Heart left ventricle (tissue), 16 donors: ENCODE measurements at regions of chr5 and their contacts with region 1.

Region 1: DNA sequence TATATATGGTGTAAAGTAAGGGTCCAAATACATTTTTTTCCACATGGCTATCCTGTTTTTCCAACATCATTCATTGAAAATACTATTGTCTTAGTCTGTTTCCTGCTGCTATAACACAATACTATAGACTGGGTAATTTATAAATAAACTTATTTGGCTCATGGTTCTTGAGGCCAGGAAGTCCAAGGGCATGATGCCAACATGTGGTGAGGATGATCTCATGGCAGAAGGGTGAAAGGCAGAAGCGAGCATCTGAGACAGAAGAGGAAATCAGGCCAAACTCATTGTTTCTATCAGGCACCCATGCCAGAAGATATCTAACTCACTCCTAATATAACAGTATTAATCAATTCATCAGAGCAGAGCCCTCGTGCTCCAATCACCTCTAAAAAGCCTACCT is 42.6 kb downstream of the ANKRD55 start:
- DNase-seq: peak in 4 of 5 donors; percentile 43 to 68 (median 54)
- ATAC-seq: peak in 3 of 4 donors; percentile 31 to 64 (median 52)
- H3K4me3 ChIP-seq: no peak overlapping the region
- H3K27ac ChIP-seq: peak overlapping the region in 2 of 12 donors; percentile 48 to 53
- H3K4me1 ChIP-seq: peaks cover 0 to 25% (median 0%) of the 10 kb centered on the region in 12 donors
- H3K27me3 ChIP-seq: no peaks in the 10 kb centered on the region
- CTCF ChIP-seq: no peak
- POLR2A ChIP-seq: no peak

Region 2: GRCh38 chr5:55577353-55578060 is 613.0 kb before region 1 on chr5:
- intact Hi-C with region 1: no loop called
- DNase-seq: peak in 4 of 5 donors; percentile 77 to 84 (median 81)
- ATAC-seq: peak; percentile 91 to 94 (median 94)
- H3K4me3 ChIP-seq: no peak overlapping the region
- H3K27ac ChIP-seq: peak overlapping the region; percentile 71 to 90 (median 82)
- H3K4me1 ChIP-seq: peaks cover 6 to 53% (median 48%) of the 10 kb centered on the region in 12 donors
- H3K27me3 ChIP-seq: no peaks in the 10 kb centered on the region
- CTCF ChIP-seq: no peak
- POLR2A ChIP-seq: no peak

Region 3: GRCh38 chr5:55711968-55712859 is 478.3 kb before region 1 on chr5 and contains the start of gene SLC38A9:
- intact Hi-C with region 1: loop called in 2 of 10 experiments (anchors 10 kb)
- DNase-seq: peak; percentile 96 to 97 (median 97)
- ATAC-seq: peak; percentile 100
- H3K4me3 ChIP-seq: peak within 1 kb of the TSS; percentile 56 to 97 (median 90)
- H3K27ac ChIP-seq: peak within 1 kb of the TSS in 11 of 12 donors; percentile 13 to 80 (median 65)
- H3K4me1 ChIP-seq: peaks cover 0 to 26% (median 7%) of the 10 kb centered on the region in 12 donors
- H3K27me3 ChIP-seq: no peaks in the 10 kb centered on the region
- CTCF ChIP-seq: no peak
- POLR2A ChIP-seq: peak in 1 of 2 donors; percentile 67
- total RNA-seq, gene SLC38A9: 3.9 to 13.5 (median 7.3) TPM

Region 4: GRCh38 chr5:55982957-55983381 is 207.5 kb before region 1 on chr5:
- intact Hi-C with region 1: loop called in 1 of 10 experiments (anchors 5 kb)
- DNase-seq: no peak
- ATAC-seq: peak; percentile 31 to 65 (median 46)
- H3K4me3 ChIP-seq: no peak overlapping the region
- H3K27ac ChIP-seq: no peak overlapping the region
- H3K4me1 ChIP-seq: peaks cover 6 to 81% (median 33%) of the 10 kb centered on the region in 12 donors
- H3K27me3 ChIP-seq: no peaks in the 10 kb centered on the region
- CTCF ChIP-seq: peak in 7 of 12 donors; percentile 9 to 52 (median 28)
- POLR2A ChIP-seq: no peak